ENCODE measurements at regions of chr14 and their contacts with region 1.

Region 1: GRCh38 chr14:88824314-88825077 is at the start of gene TTC8:
- DNase-seq: peak; percentile 57 to 59
- H3K4me3 ChIP-seq: peak within 1 kb of the TSS; percentile 74
- H3K27ac ChIP-seq: peak within 1 kb of the TSS; percentile 76
- H3K4me1 ChIP-seq: peaks cover 10% of the 10 kb centered on the region
- H3K27me3 ChIP-seq: no peaks in the 10 kb centered on the region
- CTCF ChIP-seq: no peak
- total RNA-seq, gene TTC8: 8.1 and 8.5 TPM in 2 replicates

Region 2: GRCh38 chr14:88551094-88551870 is 273.2 kb before region 1 on chr14:
- CTCF ChIA-PET with region 1: no interaction called
- POLR2A ChIA-PET with region 1: no interaction called
- intact Hi-C with region 1: no loop called
- DNase-seq: peak; percentile 57 to 63
- H3K4me3 ChIP-seq: peak overlapping the region; percentile 76
- H3K27ac ChIP-seq: no peak overlapping the region
- H3K4me1 ChIP-seq: peaks cover 17% of the 10 kb centered on the region
- H3K27me3 ChIP-seq: no peaks in the 10 kb centered on the region
- CTCF ChIP-seq: no peak

Region 3: GRCh38 chr14:88604212-88604611 is 220.3 kb before region 1 on chr14:
- CTCF ChIA-PET with region 1: no interaction called
- POLR2A ChIA-PET with region 1: interaction called, 15 read pairs
- intact Hi-C with region 1: no loop called
- DNase-seq: no peak
- H3K4me3 ChIP-seq: no peak overlapping the region
- H3K27ac ChIP-seq: no peak overlapping the region
- H3K4me1 ChIP-seq: no peaks in the 10 kb centered on the region
- H3K27me3 ChIP-seq: no peaks in the 10 kb centered on the region
- CTCF ChIP-seq: no peak

Region 4: DNA sequence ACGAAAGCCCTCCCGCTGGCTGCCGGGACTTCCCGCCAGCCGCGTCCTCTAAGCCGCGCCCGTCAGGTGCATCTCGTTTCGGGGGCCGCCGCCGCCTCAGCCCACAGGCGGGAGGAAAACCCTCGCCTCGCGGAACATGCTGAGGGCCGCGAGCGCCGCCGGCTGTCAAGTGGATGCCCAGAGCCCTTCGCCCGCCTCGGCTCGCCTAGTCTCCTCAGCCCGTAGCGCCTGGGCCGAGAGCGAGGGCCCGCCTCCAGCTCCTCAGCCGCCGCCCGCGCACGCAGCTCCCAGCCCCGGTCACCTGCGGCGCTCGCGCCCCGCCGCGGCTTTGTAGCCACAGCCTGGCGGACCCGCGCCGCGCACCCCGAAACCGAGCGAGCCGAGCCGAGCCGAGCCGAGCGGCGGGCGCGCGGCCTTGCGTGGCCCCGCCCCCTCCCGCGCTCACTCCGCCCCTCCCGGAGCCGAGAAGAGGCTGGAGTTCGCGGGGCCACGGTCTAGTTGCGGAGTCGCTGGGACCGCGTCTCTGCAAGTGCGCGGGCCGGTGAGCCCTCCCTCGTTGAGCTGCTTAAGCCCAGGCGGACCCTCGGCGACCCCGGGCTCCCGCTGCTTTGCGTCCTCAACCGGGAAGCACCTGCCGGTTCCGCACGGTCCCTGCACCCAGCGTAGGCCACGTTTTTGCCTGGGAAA is 31.8 kb before region 1 on chr14 and contains the start of gene EML5:
- CTCF ChIA-PET with region 1: no interaction called
- POLR2A ChIA-PET with region 1: no interaction called
- intact Hi-C with region 1: loop called (anchors 2 kb)
- DNase-seq: peak; percentile 61 to 62
- H3K4me3 ChIP-seq: peak within 1 kb of the TSS; percentile 63
- H3K27ac ChIP-seq: no peak within 1 kb of the TSS
- H3K4me1 ChIP-seq: no peaks in the 10 kb centered on the region
- H3K27me3 ChIP-seq: no peaks in the 10 kb centered on the region
- CTCF ChIP-seq: no peak
- total RNA-seq, gene EML5: 0.43 and 0.46 TPM in 2 replicates

Measured in PC-9 (cell line).